Endothelial cell of umbilical vein (primary cell): ENCODE measurements at regions of chr17 and their contacts with region 1.

Region 1: DNA sequence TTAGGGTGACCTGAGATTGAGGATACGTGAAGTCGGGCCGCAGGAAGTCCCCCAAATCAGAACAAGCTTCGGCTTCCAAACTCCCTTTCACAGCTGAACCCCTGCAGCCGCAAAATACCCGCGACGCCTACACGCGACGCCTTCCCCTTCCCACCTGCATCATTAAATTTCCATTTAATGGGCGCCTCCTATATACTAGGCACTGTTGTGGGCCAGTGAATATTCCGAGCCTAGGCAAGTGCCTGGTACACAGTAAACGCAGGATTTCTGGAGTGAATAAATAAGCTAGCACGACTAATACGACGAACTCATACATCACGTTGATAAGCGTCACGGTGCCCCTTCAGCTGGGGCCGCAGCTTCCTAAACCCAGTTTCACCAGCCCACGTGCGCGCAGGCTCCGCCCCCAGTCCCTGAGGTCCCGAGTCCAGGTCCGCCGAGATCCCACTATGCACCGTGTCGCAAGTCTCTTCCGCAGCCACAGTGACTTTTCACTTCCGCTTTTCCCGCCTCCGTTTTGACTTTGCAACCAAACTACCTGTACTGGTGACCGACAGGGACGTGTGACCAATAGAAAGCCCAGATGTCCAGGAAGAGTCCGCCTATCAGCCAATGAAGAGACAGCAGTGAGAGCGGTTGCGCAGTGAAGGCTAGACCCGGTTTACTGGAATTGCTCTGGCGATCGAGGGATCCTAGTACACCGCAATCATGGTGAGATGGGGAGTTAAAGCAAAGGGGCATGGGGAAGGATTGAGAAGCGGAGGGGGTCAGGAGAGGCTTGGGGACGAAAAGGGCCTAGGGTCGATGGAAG is at the start of gene PSMB3:
- DNase-seq: peak; percentile 99
- H3K4me3 ChIP-seq: peak within 1 kb of the TSS; percentile 59 to 82 (median 73)
- H3K27ac ChIP-seq: peak within 1 kb of the TSS; percentile 40
- H3K4me1 ChIP-seq: peaks cover 34% of the 10 kb centered on the region
- H3K27me3 ChIP-seq: no peaks in the 10 kb centered on the region
- CTCF ChIP-seq: no peak
- POLR2A ChIP-seq: peak; percentile 3
- total RNA-seq, gene PSMB3: 213 and 227 TPM in 2 replicates

Region 2: GRCh38 chr17:38702166-38702899 is 50.0 kb before region 1 on chr17:
- CTCF ChIA-PET with region 1: no interaction called
- POLR2A ChIA-PET with region 1: no interaction called
- dilution Hi-C with region 1: no loop called
- intact Hi-C with region 1: loop called (anchors 2 kb)
- DNase-seq: peak; percentile 77
- H3K4me3 ChIP-seq: peak overlapping the region; percentile 31 to 59 (median 47)
- H3K27ac ChIP-seq: peak overlapping the region; percentile 27
- H3K4me1 ChIP-seq: peaks cover 44% of the 10 kb centered on the region
- H3K27me3 ChIP-seq: peaks cover 0 to 2% of the 10 kb centered on the region in 2 experiments
- CTCF ChIP-seq: no peak
- POLR2A ChIP-seq: peak; percentile 44

Region 3: DNA sequence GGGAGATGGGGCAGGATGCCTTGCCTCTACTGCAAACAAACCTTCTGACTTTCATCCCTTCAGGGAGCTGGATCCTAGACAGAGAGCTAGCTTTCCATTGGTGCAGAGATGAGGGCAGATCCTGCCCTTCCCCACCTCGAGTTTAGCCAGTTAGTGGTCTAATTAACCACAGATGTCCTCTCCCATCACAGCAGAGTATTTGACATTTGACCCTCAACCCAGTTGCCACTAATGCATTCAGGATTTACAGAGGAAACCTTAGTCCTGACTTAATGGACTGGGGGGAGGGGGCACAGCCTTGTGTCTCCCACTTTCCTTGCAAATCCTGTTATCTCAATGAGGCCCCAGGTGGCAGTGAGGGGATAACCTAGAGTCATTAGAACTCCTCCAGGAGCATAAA is 36.9 kb after region 1 on chr17:
- CTCF ChIA-PET with region 1: no interaction called
- POLR2A ChIA-PET with region 1: no interaction called
- dilution Hi-C with region 1: no loop called
- intact Hi-C with region 1: loop called (anchors 2 kb)
- DNase-seq: no peak
- H3K4me3 ChIP-seq: no peak overlapping the region
- H3K27ac ChIP-seq: no peak overlapping the region
- H3K4me1 ChIP-seq: peaks cover 22% of the 10 kb centered on the region
- H3K27me3 ChIP-seq: no peaks in the 10 kb centered on the region
- CTCF ChIP-seq: no peak
- POLR2A ChIP-seq: no peak

Region 4: GRCh38 chr17:38799378-38800236 is 47.3 kb after region 1 on chr17 and contains the start of gene PIP4K2B:
- CTCF ChIA-PET with region 1: no interaction called
- POLR2A ChIA-PET with region 1: no interaction called
- dilution Hi-C with region 1: no loop called
- intact Hi-C with region 1: loop called (anchors 2 kb)
- DNase-seq: peak; percentile 96
- H3K4me3 ChIP-seq: peak within 1 kb of the TSS; percentile 51 to 94 (median 70)
- H3K27ac ChIP-seq: peak within 1 kb of the TSS; percentile 94
- H3K4me1 ChIP-seq: peaks cover 17% of the 10 kb centered on the region
- H3K27me3 ChIP-seq: no peaks in the 10 kb centered on the region
- CTCF ChIP-seq: no peak
- POLR2A ChIP-seq: peak; percentile 50
- total RNA-seq, gene PIP4K2B: 48.1 and 48.8 TPM in 2 replicates

Region 5: DNA sequence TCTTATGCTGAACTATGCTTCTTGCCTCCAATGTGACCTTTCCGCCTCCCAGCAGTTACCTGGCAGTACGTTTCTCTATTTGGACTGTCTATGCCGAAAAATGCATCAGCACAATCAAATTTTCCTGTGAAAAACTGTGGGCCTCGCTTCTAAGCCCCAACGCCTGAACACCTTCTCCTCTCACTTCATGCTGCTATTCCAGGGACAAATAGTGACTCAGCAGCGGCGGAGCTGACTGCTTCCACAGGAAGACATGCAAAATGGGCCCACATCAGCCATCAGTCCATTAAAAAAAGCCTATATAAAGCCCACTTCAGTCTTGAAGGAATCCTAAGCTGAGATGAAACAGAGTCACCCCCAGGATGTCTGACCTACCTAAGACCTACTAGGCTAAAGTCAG is 57.5 kb after region 1 on chr17:
- CTCF ChIA-PET with region 1: no interaction called
- POLR2A ChIA-PET with region 1: no interaction called
- dilution Hi-C with region 1: no loop called
- intact Hi-C with region 1: no loop called
- DNase-seq: no peak
- H3K4me3 ChIP-seq: no peak overlapping the region
- H3K27ac ChIP-seq: no peak overlapping the region
- H3K4me1 ChIP-seq: no peaks in the 10 kb centered on the region
- H3K27me3 ChIP-seq: no peaks in the 10 kb centered on the region
- CTCF ChIP-seq: no peak
- POLR2A ChIP-seq: no peak

Region 6: GRCh38 chr17:38824899-38825761 is 72.8 kb after region 1 on chr17 and contains the start of gene CWC25:
- CTCF ChIA-PET with region 1: no interaction called
- POLR2A ChIA-PET with region 1: no interaction called
- dilution Hi-C with region 1: no loop called
- intact Hi-C with region 1: loop called (anchors 2 kb)
- DNase-seq: peak; percentile 99
- H3K4me3 ChIP-seq: peak within 1 kb of the TSS; percentile 64 to 79 (median 77)
- H3K27ac ChIP-seq: peak within 1 kb of the TSS; percentile 96
- H3K4me1 ChIP-seq: peaks cover 10% of the 10 kb centered on the region
- H3K27me3 ChIP-seq: no peaks in the 10 kb centered on the region
- CTCF ChIP-seq: no peak
- POLR2A ChIP-seq: peak; percentile 87
- total RNA-seq, gene CWC25: 19.7 and 20.0 TPM in 2 replicates

Region 7: GRCh38 chr17:38967290-38967738 is 215.0 kb after region 1 on chr17 and contains the start of gene FBXO47:
- CTCF ChIA-PET with region 1: no interaction called
- POLR2A ChIA-PET with region 1: no interaction called
- dilution Hi-C with region 1: no loop called
- intact Hi-C with region 1: loop called (anchors 2 kb)
- DNase-seq: peak; percentile 93
- H3K4me3 ChIP-seq: peak within 1 kb of the TSS in 2 of 3 experiments; percentile 24 to 34
- H3K27ac ChIP-seq: no peak within 1 kb of the TSS
- H3K4me1 ChIP-seq: no peaks in the 10 kb centered on the region
- H3K27me3 ChIP-seq: peaks cover 0 to 4% of the 10 kb centered on the region in 2 experiments
- CTCF ChIP-seq: no peak
- POLR2A ChIP-seq: peak; percentile 63
- total RNA-seq, gene FBXO47: not detected in 2 replicates

Region 8: GRCh38 chr17:39001703-39002637 is 249.6 kb after region 1 on chr17:
- CTCF ChIA-PET with region 1: no interaction called
- POLR2A ChIA-PET with region 1: no interaction called
- dilution Hi-C with region 1: no loop called
- intact Hi-C with region 1: no loop called
- DNase-seq: peak; percentile 35
- H3K4me3 ChIP-seq: no peak overlapping the region
- H3K27ac ChIP-seq: no peak overlapping the region
- H3K4me1 ChIP-seq: peaks cover 11% of the 10 kb centered on the region
- H3K27me3 ChIP-seq: peaks cover 0 to 2% of the 10 kb centered on the region in 2 experiments
- CTCF ChIP-seq: no peak
- POLR2A ChIP-seq: no peak